ENCODE measurements at regions of chr7 and their contacts with region 1.

Region 1: GRCh38 chr7:47743965-47744591 is 162.2 kb upstream of the TNS3 start:
- DNase-seq: peak; percentile 56
- H3K4me3 ChIP-seq: no peak overlapping the region
- H3K27ac ChIP-seq: no peak overlapping the region
- H3K4me1 ChIP-seq: peaks cover 7% of the 10 kb centered on the region
- H3K27me3 ChIP-seq: no peaks in the 10 kb centered on the region
- CTCF ChIP-seq: no peak
- POLR2A ChIP-seq: no peak

Region 2: DNA sequence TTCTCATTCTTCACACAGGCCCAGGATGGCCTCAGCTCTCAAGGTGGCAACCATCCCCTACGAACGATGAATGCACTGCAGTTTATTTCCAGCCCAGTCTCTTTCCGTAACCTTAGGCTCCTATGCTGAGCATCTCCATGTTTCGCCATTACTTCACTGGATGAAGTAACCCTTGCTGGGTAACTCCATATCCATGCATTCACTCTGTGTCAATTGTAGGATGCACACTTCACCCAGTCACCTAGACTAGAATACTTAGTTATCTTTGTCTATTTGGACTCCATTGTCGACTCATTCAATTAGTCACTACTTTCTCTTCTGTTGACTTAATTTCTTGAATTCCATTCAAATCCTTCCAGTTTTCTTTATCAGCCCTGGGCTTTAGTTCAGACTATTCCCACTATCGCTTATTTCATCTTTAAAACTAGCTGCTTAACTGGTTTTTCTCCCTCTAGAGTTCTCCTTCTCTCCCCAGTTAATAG is 50.9 kb before region 1 on chr7:
- CTCF ChIA-PET with region 1: no interaction called
- POLR2A ChIA-PET with region 1: no interaction called
- dilution Hi-C with region 1: no loop called
- intact Hi-C with region 1: no loop called
- DNase-seq: no peak
- H3K4me3 ChIP-seq: no peak overlapping the region
- H3K27ac ChIP-seq: no peak overlapping the region
- H3K4me1 ChIP-seq: no peaks in the 10 kb centered on the region
- H3K27me3 ChIP-seq: no peaks in the 10 kb centered on the region
- CTCF ChIP-seq: no peak
- POLR2A ChIP-seq: no peak

Region 3: GRCh38 chr7:47757921-47758411 is 13.9 kb after region 1 on chr7:
- CTCF ChIA-PET with region 1: interaction called, 4 read pairs
- POLR2A ChIA-PET with region 1: no interaction called
- dilution Hi-C with region 1: no loop called
- intact Hi-C with region 1: loop called (anchors 2 kb)
- DNase-seq: no peak
- H3K4me3 ChIP-seq: no peak overlapping the region
- H3K27ac ChIP-seq: no peak overlapping the region
- H3K4me1 ChIP-seq: no peaks in the 10 kb centered on the region
- H3K27me3 ChIP-seq: no peaks in the 10 kb centered on the region
- CTCF ChIP-seq: no peak
- POLR2A ChIP-seq: no peak